IMR-90 (cell line): ENCODE measurements at regions of chr15 and their contacts with region 1.

Region 1: DNA sequence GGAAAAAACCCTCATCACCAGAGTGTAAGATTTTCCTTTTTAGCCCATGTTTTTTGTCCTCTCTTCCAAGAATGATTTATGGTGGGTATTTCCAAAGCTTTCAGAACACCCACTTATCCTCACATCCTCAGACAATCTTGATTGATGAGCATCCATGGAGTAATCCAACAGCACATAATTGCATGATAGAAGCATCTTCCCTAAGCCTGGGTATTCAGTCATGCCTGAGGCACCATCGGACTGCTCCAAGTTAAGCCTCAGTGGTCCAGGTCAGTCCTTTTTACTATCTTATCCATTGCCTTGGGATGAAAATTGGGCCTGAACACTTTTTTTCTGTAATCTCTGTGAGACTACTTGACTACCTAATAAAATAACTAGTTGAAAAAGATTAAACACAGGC is 676.0 kb upstream of the SEMA6D start:
- DNase-seq: no peak
- ATAC-seq: no peak
- H3K4me3 ChIP-seq: no peak overlapping the region
- H3K27ac ChIP-seq: no peak overlapping the region
- H3K4me1 ChIP-seq: no peaks in the 10 kb centered on the region
- H3K27me3 ChIP-seq: no peaks in the 10 kb centered on the region
- CTCF ChIP-seq: no peak
- POLR2A ChIP-seq: no peak
- RAD21 ChIP-seq: no peak

Region 2: GRCh38 chr15:46996359-46996758 is 44.9 kb before region 1 on chr15:
- CTCF ChIA-PET with region 1: no interaction called
- POLR2A ChIA-PET with region 1: no interaction called
- dilution Hi-C with region 1: no loop called
- in situ Hi-C with region 1: no loop called
- intact Hi-C with region 1: loop called (anchors 10 kb)
- DNase-seq: no peak
- ATAC-seq: no peak
- H3K4me3 ChIP-seq: no peak overlapping the region
- H3K27ac ChIP-seq: no peak overlapping the region
- H3K4me1 ChIP-seq: no peaks in the 10 kb centered on the region
- H3K27me3 ChIP-seq: no peaks in the 10 kb centered on the region
- CTCF ChIP-seq: no peak
- POLR2A ChIP-seq: no peak
- RAD21 ChIP-seq: no peak

Region 3: GRCh38 chr15:47685141-47685870 is 644.0 kb after region 1 on chr15:
- CTCF ChIA-PET with region 1: no interaction called
- POLR2A ChIA-PET with region 1: no interaction called
- dilution Hi-C with region 1: no loop called
- in situ Hi-C with region 1: no loop called
- intact Hi-C with region 1: no loop called
- DNase-seq: peak; percentile 25
- ATAC-seq: peak; percentile 52
- H3K4me3 ChIP-seq: no peak overlapping the region
- H3K27ac ChIP-seq: no peak overlapping the region
- H3K4me1 ChIP-seq: no peaks in the 10 kb centered on the region; the same call in 1 of the 2 replicates
- H3K27me3 ChIP-seq: no peaks in the 10 kb centered on the region
- CTCF ChIP-seq: no peak
- POLR2A ChIP-seq: no peak
- RAD21 ChIP-seq: no peak

Region 4: GRCh38 chr15:48001393-48002039 is 960.2 kb after region 1 on chr15:
- CTCF ChIA-PET with region 1: no interaction called
- POLR2A ChIA-PET with region 1: no interaction called
- dilution Hi-C with region 1: no loop called
- in situ Hi-C with region 1: no loop called
- intact Hi-C with region 1: no loop called
- DNase-seq: no peak
- ATAC-seq: no peak
- H3K4me3 ChIP-seq: no peak overlapping the region
- H3K27ac ChIP-seq: no peak overlapping the region
- H3K4me1 ChIP-seq: no peaks in the 10 kb centered on the region
- H3K27me3 ChIP-seq: peaks cover 2% of the 10 kb centered on the region
- CTCF ChIP-seq: no peak
- POLR2A ChIP-seq: no peak
- RAD21 ChIP-seq: no peak